Activated CD4-positive, alpha-beta T cell treated with anti-CD3 and anti-CD28 coated beads for 36 hours (primary cell): ENCODE measurements at regions of chr10 and their contacts with region 1.

Region 1: DNA sequence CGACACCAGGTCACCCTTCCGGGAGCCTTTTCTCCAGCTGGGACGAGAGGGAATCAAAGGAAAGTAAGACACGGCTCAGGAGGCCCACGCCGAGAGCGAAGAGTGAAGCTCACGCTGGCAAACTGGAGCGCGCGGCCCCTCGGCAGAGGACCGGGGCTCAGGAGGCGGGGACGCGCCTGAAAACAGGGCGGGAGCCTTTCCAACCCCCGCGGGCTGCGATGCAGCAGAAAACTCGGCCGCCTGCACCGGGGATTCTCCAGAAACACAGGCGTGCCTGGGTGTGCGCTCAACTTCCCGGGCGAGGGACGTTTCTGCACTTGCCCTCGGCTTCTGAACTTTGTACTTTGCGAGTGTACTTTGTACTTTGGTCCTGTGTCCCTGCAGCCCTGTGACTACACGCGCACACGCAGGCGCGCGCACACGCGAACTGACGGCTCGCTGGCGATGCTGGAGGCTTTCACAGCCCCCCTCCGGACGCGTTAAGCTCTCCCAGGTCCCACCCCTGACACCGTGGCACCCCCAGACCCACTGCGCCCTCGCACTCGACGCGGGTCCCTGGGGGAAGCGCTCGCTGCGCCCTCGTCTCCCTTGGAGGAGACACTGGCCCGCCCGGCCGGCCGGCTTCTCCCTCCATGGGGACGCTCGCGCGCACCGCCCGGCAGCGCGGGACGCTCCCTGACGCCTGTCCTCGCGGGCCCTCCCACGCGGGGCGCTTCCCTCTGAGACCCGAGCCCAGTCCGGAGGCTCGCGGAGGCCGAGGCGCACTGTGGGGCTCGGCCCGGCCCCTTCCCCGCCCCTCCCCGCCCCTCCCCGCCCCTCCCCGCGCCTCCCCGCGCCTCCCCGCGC is 588 bp upstream of the PAOX start:
- DNase-seq: peak; percentile 77
- ATAC-seq: peak; percentile 57
- H3K4me3 Mint-ChIP-seq: peak overlapping the region; percentile 74
- H3K27ac Mint-ChIP-seq: peak overlapping the region; percentile 24
- H3K4me1 Mint-ChIP-seq: peaks cover 4% of the 10 kb centered on the region
- H3K27me3 Mint-ChIP-seq: no peaks in the 10 kb centered on the region

Region 2: GRCh38 chr10:133276435-133277201 is 101.9 kb before region 1 on chr10 and contains the start of gene ADAM8:
- CTCF ChIA-PET with region 1: no interaction called
- POLR2A ChIA-PET with region 1: no interaction called
- intact Hi-C with region 1: loop called in 1 of 2 experiments (anchors 1 kb)
- DNase-seq: peak; percentile 86
- ATAC-seq: peak; percentile 55
- H3K4me3 Mint-ChIP-seq: peak within 1 kb of the TSS; percentile 92
- H3K27ac Mint-ChIP-seq: peak within 1 kb of the TSS; percentile 90
- H3K4me1 Mint-ChIP-seq: peaks cover 19% of the 10 kb centered on the region
- H3K27me3 Mint-ChIP-seq: no peaks in the 10 kb centered on the region
- total RNA-seq, gene ADAM8: 124 to 176 TPM

Region 3: DNA sequence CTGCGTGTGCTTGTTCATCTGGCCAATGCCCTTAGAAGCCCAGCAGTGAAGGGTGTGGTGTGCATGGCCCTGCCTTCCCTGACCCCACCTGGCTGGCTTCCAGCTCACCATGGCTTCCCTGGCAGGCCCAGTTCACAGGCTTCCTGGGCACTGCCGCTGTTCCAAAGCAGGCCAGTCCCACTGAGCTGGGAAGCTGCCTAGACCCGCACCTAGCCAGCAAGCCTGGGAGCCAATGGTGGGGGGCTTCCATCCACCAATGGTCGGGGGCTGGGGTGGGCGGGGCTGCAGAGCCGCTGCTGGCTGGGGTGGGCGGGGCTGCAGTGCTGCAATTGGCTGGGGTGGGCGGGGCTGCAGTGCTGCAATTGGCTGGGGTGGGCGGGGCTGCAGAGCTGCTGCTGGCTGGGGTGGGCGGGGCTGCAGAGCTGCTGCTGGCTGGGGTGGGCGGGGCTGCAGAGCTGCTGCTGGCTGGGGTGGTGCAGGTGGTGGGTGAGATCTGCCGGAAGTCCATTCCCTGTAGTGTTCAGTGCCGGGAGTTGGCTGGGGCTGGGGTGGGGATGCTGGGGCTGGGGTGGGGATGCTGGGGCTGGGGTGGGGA is 54.2 kb before region 1 on chr10:
- CTCF ChIA-PET with region 1: interaction called, 6 read pairs
- POLR2A ChIA-PET with region 1: no interaction called
- intact Hi-C with region 1: loop called in 1 of 2 experiments (anchors 1 kb)
- DNase-seq: peak; percentile 84
- ATAC-seq: peak; percentile 85
- H3K4me3 Mint-ChIP-seq: no peak overlapping the region
- H3K27ac Mint-ChIP-seq: no peak overlapping the region
- H3K4me1 Mint-ChIP-seq: peaks cover 7% of the 10 kb centered on the region
- H3K27me3 Mint-ChIP-seq: peaks cover 26% of the 10 kb centered on the region

Region 4: GRCh38 chr10:133394064-133394663 is 15.7 kb after region 1 on chr10 and contains the start of gene MTG1:
- CTCF ChIA-PET with region 1: interaction called, 4 read pairs
- POLR2A ChIA-PET with region 1: interaction called, 3 read pairs
- intact Hi-C with region 1: loop called (anchors 1 kb)
- DNase-seq: peak; percentile 97
- ATAC-seq: peak; percentile 76
- H3K4me3 Mint-ChIP-seq: peak within 1 kb of the TSS; percentile 90
- H3K27ac Mint-ChIP-seq: peak within 1 kb of the TSS; percentile 93
- H3K4me1 Mint-ChIP-seq: peaks cover 51% of the 10 kb centered on the region
- H3K27me3 Mint-ChIP-seq: no peaks in the 10 kb centered on the region
- total RNA-seq, gene MTG1: 46.9 to 52.1 TPM